ENCODE measurements at regions of chr10 and their contacts with region 1.

Region 1: GRCh38 chr10:80444646-80445319 is 9.3 kb upstream of the TSPAN14 start:
- DNase-seq: peak; percentile 67 to 77
- ATAC-seq: peak; percentile 90 to 98 (median 94)
- H3K4me3 ChIP-seq: no peak overlapping the region
- H3K27ac ChIP-seq: no peak overlapping the region
- H3K4me1 ChIP-seq: no peaks in the 10 kb centered on the region
- H3K27me3 ChIP-seq: no peaks in the 10 kb centered on the region
- CTCF ChIP-seq: peak; percentile 69

Region 2: GRCh38 chr10:80389809-80390208 is 55.0 kb before region 1 on chr10:
- intact Hi-C with region 1: loop called in 1 of 2 experiments (anchors 5 kb)
- DNase-seq: no peak
- ATAC-seq: no peak
- H3K4me3 ChIP-seq: no peak overlapping the region
- H3K27ac ChIP-seq: no peak overlapping the region
- H3K4me1 ChIP-seq: no peaks in the 10 kb centered on the region
- H3K27me3 ChIP-seq: no peaks in the 10 kb centered on the region
- CTCF ChIP-seq: no peak

Region 3: DNA sequence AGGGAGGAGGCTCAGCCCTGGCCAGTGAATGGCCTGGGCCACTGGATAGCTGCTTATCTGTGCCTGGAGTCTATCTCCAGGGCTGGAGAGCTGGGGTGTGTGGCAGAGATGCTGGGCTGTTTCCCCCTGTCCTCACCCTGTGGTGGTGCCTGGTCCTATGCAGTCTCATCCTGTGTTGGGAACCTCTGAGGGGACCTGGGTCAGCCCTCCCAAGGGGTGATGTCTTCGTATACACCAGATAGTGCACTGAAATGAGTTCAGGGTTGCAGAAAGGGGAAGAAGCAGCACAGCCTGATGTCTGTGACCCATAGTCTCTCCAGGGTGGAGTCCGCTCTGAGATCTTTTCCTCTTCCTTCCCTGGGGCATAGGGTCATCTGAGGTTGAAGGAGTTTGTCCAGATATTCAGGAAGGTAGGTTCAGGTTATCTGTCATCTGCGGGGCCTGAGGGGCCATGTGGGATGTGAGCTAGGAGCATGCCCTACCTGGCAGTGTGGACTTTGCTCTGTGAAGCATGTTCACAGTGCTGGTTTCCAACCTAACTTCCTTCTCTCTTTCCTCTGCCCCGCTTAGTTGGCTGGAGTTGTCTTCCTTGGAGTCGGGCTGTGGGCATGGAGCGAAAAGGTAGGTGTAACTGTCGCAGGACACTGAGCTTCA is 59.5 kb after region 1 on chr10:
- intact Hi-C with region 1: loop called (anchors 1 to 2 kb)
- DNase-seq: peak in 1 of 2 donors; percentile 39
- ATAC-seq: no peak
- H3K4me3 ChIP-seq: no peak overlapping the region
- H3K27ac ChIP-seq: peak overlapping the region; percentile 31
- H3K4me1 ChIP-seq: peaks cover 48% of the 10 kb centered on the region
- H3K27me3 ChIP-seq: no peaks in the 10 kb centered on the region
- CTCF ChIP-seq: no peak